WTC11 (cell line): ENCODE measurements at regions of chr9 and their contacts with region 1.

Region 1: GRCh38 chr9:97237951-97238851 is 69.3 kb upstream of the CCDC180 start:
- DNase-seq: peak; percentile 82
- ATAC-seq: peak; percentile 90
- H3K4me3 Mint-ChIP-seq: peak overlapping the region; percentile 94
- H3K27ac Mint-ChIP-seq: peak overlapping the region; percentile 99
- H3K4me1 Mint-ChIP-seq: peaks cover 26% of the 10 kb centered on the region
- H3K27me3 Mint-ChIP-seq: no peaks in the 10 kb centered on the region; the same call in 1 of the 2 replicates
- CTCF ChIP-seq: no peak

Region 2: DNA sequence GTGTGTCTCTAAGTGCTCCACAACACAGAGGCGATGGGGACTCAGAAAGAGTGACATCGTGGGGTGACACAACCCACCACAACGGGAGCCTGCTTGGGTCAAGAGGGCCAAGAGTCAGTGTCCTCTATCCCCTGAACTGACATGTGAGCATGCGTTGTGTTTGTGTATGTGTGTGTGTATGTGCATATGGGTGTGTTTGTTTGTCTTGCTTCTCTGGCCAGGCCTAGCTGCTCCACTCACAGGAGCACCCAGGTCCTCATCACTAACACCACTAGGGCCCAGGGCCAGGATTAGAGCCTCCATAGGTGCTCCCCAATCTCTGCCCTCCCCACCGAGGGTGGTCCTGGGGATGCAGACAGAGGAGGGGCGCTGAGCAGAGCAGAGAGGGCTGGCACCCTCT is 84.2 kb before region 1 on chr9:
- CTCF ChIA-PET with region 1: no interaction called
- POLR2A ChIA-PET with region 1: no interaction called
- DNase-seq: no peak
- ATAC-seq: no peak
- H3K4me3 Mint-ChIP-seq: no peak overlapping the region
- H3K27ac Mint-ChIP-seq: no peak overlapping the region
- H3K4me1 Mint-ChIP-seq: peaks cover 30% of the 10 kb centered on the region
- H3K27me3 Mint-ChIP-seq: no peaks in the 10 kb centered on the region
- CTCF ChIP-seq: no peak

Region 3: GRCh38 chr9:97220894-97221477 is 17.2 kb before region 1 on chr9:
- CTCF ChIA-PET with region 1: interaction called, 4 read pairs
- POLR2A ChIA-PET with region 1: interaction called, 56 read pairs
- DNase-seq: peak; percentile 41
- ATAC-seq: peak; percentile 76
- H3K4me3 Mint-ChIP-seq: peak overlapping the region; percentile 86
- H3K27ac Mint-ChIP-seq: peak overlapping the region; percentile 99
- H3K4me1 Mint-ChIP-seq: peaks cover 48% of the 10 kb centered on the region
- H3K27me3 Mint-ChIP-seq: no peaks in the 10 kb centered on the region
- CTCF ChIP-seq: no peak

Region 4: DNA sequence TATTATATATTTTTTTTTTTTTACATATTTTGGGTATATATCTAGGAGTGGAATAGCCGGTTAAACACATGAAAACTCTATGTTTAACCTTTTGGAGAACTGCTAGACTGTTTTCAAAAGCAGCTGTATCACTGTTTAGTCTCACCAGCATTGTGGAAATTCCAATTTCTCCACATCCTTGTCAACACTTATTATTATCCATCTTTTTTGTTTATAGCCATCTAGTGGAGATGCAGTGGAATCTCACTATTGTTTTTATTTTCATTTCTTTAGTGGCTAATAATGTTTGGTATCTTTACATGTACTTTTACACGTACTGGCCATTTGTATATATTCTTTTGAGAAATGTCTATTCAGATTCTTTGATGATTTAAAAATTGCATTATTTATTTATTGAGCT is 46.6 kb after region 1 on chr9:
- CTCF ChIA-PET with region 1: no interaction called
- POLR2A ChIA-PET with region 1: no interaction called
- DNase-seq: no peak
- ATAC-seq: no peak
- H3K4me3 Mint-ChIP-seq: no peak overlapping the region
- H3K27ac Mint-ChIP-seq: no peak overlapping the region
- H3K4me1 Mint-ChIP-seq: no peaks in the 10 kb centered on the region
- H3K27me3 Mint-ChIP-seq: no peaks in the 10 kb centered on the region
- CTCF ChIP-seq: no peak